Heart right ventricle (tissue), 16 donors: ENCODE measurements at regions of chr3 and their contacts with region 1.

Region 1: DNA sequence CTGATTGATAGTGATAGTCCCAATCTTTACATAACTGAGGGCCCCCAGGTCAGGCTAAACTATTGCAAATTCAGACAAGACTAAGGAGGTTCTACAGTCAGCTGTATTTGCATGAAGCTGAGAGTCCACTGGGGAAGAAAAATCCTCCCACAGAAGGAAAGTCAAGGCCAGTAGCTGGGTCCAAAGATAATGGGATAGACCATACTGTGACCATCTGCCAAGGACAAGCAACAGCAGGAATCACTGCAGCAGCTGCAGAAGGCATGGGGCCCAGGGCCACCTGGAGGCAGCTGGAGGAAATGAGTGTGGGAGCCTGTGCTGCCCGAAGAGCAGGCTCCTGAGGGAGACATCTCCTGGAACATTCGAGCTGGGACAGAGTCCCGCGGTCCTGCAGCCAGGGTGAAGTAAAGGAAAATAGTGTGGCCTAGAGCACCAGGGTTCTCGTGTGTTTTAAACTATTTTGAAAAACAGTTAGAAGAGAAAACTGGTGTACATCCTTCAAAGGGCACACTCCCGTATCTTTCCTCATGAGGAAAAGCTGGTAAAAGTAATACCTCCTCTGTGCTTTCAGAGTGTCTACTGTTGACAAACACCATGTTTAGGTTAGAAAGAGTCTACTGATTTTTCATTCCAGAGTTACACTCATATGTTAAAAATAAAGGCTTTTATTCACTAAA is 13.2 kb upstream of the TMEM212 start:
- DNase-seq: peak; percentile 81 to 87
- ATAC-seq: peak; percentile 86 to 95 (median 93)
- H3K4me3 ChIP-seq: no peak overlapping the region
- H3K27ac ChIP-seq: peak overlapping the region; percentile 28 to 81 (median 60)
- H3K4me1 ChIP-seq: peaks cover 3 to 65% (median 40%) of the 10 kb centered on the region in 9 donors
- H3K27me3 ChIP-seq: no peaks in the 10 kb centered on the region
- CTCF ChIP-seq: peak; percentile 44 to 81 (median 70)

Region 2: GRCh38 chr3:171481011-171481410 is 349.0 kb before region 1 on chr3:
- intact Hi-C with region 1: no loop called
- DNase-seq: no peak
- ATAC-seq: peak in 2 of 8 donors; percentile 29 to 70
- H3K4me3 ChIP-seq: no peak overlapping the region
- H3K27ac ChIP-seq: no peak overlapping the region
- H3K4me1 ChIP-seq: no peaks in the 10 kb centered on the region
- H3K27me3 ChIP-seq: no peaks in the 10 kb centered on the region
- CTCF ChIP-seq: no peak

Region 3: GRCh38 chr3:171640520-171641412 is 189.2 kb before region 1 on chr3:
- intact Hi-C with region 1: loop called in 5 of 10 experiments (anchors 5 to 10 kb)
- DNase-seq: no peak
- ATAC-seq: peak in 7 of 8 donors; percentile 63 to 84 (median 72)
- H3K4me3 ChIP-seq: no peak overlapping the region
- H3K27ac ChIP-seq: peak overlapping the region in 8 of 10 donors; percentile 12 to 82 (median 58)
- H3K4me1 ChIP-seq: peaks cover 0 to 38% (median 25%) of the 10 kb centered on the region in 9 donors
- H3K27me3 ChIP-seq: no peaks in the 10 kb centered on the region
- CTCF ChIP-seq: no peak

Region 4: GRCh38 chr3:171703756-171704401 is 126.1 kb before region 1 on chr3:
- intact Hi-C with region 1: loop called in 1 of 10 experiments (anchors 10 kb)
- DNase-seq: no peak
- ATAC-seq: peak in 2 of 8 donors; percentile 52 to 53
- H3K4me3 ChIP-seq: no peak overlapping the region
- H3K27ac ChIP-seq: no peak overlapping the region
- H3K4me1 ChIP-seq: peaks cover 0 to 15% (median 4%) of the 10 kb centered on the region in 9 donors
- H3K27me3 ChIP-seq: no peaks in the 10 kb centered on the region
- CTCF ChIP-seq: peak in 7 of 9 donors; percentile 32 to 55 (median 50)

Region 5: DNA sequence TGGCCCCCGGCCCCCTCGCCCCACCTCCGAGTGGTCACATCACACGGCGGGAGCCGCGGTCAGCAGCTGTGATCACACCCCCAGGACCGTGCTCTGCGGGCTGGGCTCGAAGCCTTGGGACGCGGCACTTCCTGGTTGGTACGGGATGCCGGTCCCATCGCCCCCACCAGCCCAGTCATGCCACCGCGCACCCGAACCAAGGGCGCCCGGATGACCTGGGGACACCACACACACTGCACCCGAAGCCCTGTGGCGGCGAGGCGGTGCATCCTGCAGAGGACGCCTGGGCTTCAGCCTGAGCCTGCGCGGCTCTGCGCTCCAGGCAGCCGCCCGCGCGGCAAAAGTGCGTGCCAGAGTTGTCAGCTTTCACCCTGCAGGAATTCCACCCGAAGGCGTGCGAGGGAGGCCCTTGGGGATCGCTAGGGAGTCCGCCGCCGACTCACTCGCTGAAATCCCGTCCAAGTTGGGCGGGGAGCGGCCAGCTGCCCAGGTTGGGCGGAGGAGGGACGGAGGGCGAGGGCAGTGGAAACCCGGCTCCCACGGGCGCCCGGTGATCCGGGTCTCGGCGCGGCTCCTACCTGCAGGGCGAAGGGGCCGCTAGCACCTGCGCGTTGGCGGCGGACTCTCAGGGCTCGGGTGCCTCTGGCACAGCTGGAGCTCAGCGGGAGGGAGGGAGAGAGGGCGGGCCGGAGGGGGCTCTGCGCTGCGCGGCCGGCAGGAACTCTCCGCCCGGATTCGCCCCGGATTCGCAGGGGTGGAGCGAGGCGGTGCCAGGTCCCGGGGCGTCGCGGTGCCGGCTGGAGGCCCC is 20.0 kb before region 1 on chr3 and contains the start of gene PLD1:
- intact Hi-C with region 1: loop called in 1 of 10 experiments (anchors 2 kb)
- DNase-seq: peak; percentile 88 to 90
- ATAC-seq: peak; percentile 85 to 95 (median 88)
- H3K4me3 ChIP-seq: peak within 1 kb of the TSS; percentile 53 to 79 (median 68)
- H3K27ac ChIP-seq: peak within 1 kb of the TSS; percentile 80 to 94 (median 90)
- H3K4me1 ChIP-seq: peaks cover 0 to 73% (median 20%) of the 10 kb centered on the region in 9 donors
- H3K27me3 ChIP-seq: no peaks in the 10 kb centered on the region
- CTCF ChIP-seq: peak in 4 of 9 donors; percentile 13 to 45 (median 34)
- total RNA-seq, gene PLD1: 51.4 to 83.3 (median 67.1) TPM

Region 6: GRCh38 chr3:172317984-172318383 is 488.0 kb after region 1 on chr3:
- intact Hi-C with region 1: loop called in 2 of 10 experiments (anchors 10 kb)
- DNase-seq: peak; percentile 50 to 78
- ATAC-seq: peak; percentile 45 to 86 (median 74)
- H3K4me3 ChIP-seq: no peak overlapping the region
- H3K27ac ChIP-seq: peak overlapping the region; percentile 52 to 88 (median 80)
- H3K4me1 ChIP-seq: peaks cover 12 to 100% (median 91%) of the 10 kb centered on the region in 9 donors
- H3K27me3 ChIP-seq: no peaks in the 10 kb centered on the region
- CTCF ChIP-seq: no peak